Colonic mucosa (tissue), 4 donors: ENCODE measurements at regions of chr1 and their contacts with region 1.

Region 1: GRCh38 chr1:182781841-182782586 is 7.6 kb upstream of the NPL start:
- DNase-seq: peak; percentile 56
- H3K4me3 ChIP-seq: no peak overlapping the region
- H3K27ac ChIP-seq: no peak overlapping the region
- H3K4me1 ChIP-seq: no peaks in the 10 kb centered on the region
- H3K27me3 ChIP-seq: no peaks in the 10 kb centered on the region
- CTCF ChIP-seq: peak; percentile 47

Region 2: DNA sequence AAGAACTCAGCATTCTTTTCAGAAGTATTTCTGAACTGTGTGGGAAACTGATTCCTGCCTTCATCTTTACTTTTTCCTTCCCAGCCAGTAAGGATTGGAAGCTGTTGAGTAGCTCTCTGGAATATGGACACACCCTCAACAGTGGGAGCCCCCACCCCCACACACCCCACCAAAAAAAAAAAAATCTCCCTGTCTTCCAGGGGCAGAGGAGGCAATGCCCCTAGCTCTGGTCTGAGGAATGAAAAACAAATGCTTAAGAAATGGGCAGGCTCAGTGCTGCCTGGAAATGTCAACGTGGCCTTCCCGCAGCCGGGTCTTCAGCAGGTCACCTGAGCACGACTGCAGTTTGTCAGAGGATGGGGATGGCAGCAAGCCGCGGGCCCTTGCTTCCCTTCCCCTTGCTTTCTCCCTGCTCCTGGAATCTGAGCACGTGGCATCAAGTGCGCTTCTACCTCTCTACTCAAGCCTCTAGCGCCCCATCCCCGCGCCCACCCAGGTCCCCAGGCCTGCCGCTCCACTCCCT is 178.3 kb before region 1 on chr1:
- intact Hi-C with region 1: loop called (anchors 2 kb)
- DNase-seq: no peak
- H3K4me3 ChIP-seq: peak overlapping the region; percentile 49
- H3K27ac ChIP-seq: no peak overlapping the region
- H3K4me1 ChIP-seq: no peaks in the 10 kb centered on the region
- H3K27me3 ChIP-seq: no peaks in the 10 kb centered on the region
- CTCF ChIP-seq: no peak